ENCODE measurements at regions of chr4 and their contacts with region 1.

Region 1: DNA sequence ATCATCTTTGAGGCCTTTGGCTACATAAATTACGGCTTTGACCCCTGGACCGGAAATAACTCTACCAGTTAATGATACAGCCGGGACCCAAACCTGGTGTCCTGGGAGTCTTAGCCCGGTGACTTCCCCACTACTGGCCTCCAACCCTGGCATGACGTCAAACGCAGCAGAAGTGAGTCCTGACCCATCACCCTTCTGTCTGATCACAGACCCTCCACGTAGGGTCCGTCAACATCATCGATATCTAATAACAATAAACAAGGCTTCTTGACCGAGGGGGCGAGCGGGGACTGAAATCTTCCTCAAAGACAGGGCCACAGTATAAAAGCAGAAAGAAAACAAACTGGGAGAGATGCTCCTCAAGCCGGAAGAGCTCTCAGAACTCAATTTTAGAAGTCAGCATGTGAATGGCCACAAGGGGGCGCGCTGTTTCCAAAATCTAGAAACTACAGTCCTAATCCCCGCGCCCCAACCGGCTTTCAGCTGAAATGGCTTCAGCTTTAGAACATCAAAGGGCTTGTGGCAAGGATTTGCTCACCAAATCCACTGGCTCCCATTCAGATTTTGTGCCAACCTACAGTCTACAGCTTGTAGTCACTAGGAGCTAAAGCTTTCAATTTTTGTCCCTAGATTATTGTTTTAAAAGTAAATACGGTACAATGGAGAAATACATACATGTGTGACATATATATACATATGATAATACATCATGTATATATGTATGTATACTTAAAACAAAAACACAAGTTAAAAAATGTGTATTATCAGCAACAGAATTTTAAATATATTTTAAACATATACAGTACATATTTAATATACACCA is 46.4 kb upstream of the ENPP6 start:
- DNase-seq: peak; percentile 84
- H3K4me3 Mint-ChIP-seq: peak overlapping the region; percentile 19
- H3K27ac Mint-ChIP-seq: no peak overlapping the region
- H3K4me1 Mint-ChIP-seq: peaks cover 19% of the 10 kb centered on the region
- H3K27me3 Mint-ChIP-seq: no peaks in the 10 kb centered on the region
- CTCF ChIP-seq: peak; percentile 66

Region 2: DNA sequence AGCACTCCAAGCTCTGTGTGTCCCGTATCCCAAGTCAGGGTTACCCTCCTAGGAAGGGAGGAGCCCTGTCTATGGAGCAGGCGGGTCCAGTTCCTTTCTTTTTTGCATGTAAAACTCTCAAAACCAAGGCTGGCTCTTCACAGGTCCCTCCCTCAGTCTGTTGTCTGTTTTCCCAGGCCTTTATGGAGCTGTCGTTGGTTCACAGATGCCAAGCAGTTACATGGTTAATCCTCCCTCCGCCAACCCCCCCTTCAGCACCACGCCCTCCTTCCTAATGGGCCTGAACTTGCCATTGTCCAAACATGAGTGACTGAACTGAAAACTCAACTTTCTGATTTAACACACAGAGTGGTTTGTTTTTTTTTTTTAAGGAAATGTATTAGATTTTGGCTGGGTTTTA is 210.7 kb before region 1 on chr4:
- CTCF ChIA-PET with region 1: no interaction called
- intact Hi-C with region 1: no loop called
- DNase-seq: no peak
- H3K4me3 Mint-ChIP-seq: no peak overlapping the region
- H3K27ac Mint-ChIP-seq: no peak overlapping the region
- H3K4me1 Mint-ChIP-seq: no peaks in the 10 kb centered on the region
- H3K27me3 Mint-ChIP-seq: peaks cover 5% of the 10 kb centered on the region
- CTCF ChIP-seq: no peak

Region 3: DNA sequence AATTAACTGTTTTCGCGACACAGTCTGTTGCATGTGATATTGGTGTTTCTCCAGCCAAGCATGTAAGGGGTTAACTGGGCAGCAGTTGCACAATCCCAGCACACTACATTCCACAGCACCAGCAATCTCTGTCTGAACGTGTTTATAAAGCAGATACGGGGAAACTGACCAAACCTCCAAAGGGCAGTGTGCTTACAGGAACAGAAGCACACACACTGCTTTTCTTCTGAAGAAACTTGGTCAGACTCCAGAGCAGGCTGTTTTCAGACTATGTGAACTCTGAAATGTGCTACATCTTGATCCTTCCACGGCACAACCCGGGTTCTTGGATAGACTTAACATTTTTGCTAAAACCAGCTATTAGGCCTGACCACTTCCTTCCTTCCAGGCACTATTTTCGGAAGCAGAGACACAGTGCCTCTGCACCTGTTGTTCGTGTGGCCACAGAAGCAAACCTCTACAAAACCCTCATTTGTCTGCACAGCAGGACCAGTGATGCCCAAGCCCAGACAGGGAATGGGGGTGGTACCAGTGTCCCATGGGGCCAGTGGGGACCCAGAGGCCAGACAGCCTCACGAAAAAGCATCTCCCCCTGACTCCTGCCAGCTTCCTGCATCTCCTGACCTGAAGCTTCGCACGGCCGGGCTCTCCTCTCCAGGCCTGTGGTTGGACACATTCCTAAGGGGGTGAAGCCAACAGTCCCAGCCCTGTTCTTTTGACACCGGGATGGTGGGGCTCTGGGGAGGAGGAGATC is 120.1 kb after region 1 on chr4:
- CTCF ChIA-PET with region 1: interaction called, 4 read pairs
- intact Hi-C with region 1: loop called (anchors 5 kb)
- DNase-seq: peak; percentile 49
- H3K4me3 Mint-ChIP-seq: peak overlapping the region; percentile 60
- H3K27ac Mint-ChIP-seq: peak overlapping the region; percentile 89
- H3K4me1 Mint-ChIP-seq: peaks cover 49% of the 10 kb centered on the region
- H3K27me3 Mint-ChIP-seq: no peaks in the 10 kb centered on the region
- CTCF ChIP-seq: no peak

Region 4: GRCh38 chr4:184437565-184438265 is 173.6 kb after region 1 on chr4:
- CTCF ChIA-PET with region 1: interaction called, 11 read pairs
- intact Hi-C with region 1: no loop called
- DNase-seq: no peak
- H3K4me3 Mint-ChIP-seq: no peak overlapping the region
- H3K27ac Mint-ChIP-seq: no peak overlapping the region
- H3K4me1 Mint-ChIP-seq: no peaks in the 10 kb centered on the region
- H3K27me3 Mint-ChIP-seq: no peaks in the 10 kb centered on the region
- CTCF ChIP-seq: no peak

Region 5: DNA sequence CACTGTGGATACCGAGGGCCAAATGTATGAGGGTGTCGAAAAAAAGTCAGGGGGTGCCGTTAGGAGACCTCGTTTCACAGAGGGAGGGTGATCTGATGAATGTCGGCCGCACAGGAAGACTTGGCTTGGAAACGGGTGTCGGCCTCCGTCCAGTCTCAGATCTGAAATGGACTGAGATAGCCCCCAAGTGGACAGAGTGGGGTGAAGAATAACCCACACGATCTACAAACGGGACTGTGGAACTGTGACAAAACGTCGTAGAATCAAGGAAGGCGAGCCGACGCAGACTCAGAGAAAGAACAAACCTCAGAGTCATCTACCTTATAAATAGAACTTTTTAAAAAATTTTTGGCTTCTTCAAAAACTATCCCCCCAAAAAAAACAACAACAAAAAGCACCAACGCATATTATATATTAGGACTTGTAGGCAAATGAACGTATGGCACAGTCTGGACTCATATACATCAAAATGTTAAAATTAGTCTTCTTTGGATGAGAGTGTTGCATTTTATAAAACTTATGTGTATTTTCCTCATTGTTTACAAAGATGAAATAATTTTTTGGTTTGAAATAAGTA is 274.0 kb after region 1 on chr4:
- CTCF ChIA-PET with region 1: interaction called, 9 read pairs
- intact Hi-C with region 1: loop called (anchors 1 kb)
- DNase-seq: peak; percentile 70
- H3K4me3 Mint-ChIP-seq: peak overlapping the region; percentile 88
- H3K27ac Mint-ChIP-seq: peak overlapping the region; percentile 94
- H3K4me1 Mint-ChIP-seq: peaks cover 10% of the 10 kb centered on the region
- H3K27me3 Mint-ChIP-seq: no peaks in the 10 kb centered on the region
- CTCF ChIP-seq: peak; percentile 23

Region 6: DNA sequence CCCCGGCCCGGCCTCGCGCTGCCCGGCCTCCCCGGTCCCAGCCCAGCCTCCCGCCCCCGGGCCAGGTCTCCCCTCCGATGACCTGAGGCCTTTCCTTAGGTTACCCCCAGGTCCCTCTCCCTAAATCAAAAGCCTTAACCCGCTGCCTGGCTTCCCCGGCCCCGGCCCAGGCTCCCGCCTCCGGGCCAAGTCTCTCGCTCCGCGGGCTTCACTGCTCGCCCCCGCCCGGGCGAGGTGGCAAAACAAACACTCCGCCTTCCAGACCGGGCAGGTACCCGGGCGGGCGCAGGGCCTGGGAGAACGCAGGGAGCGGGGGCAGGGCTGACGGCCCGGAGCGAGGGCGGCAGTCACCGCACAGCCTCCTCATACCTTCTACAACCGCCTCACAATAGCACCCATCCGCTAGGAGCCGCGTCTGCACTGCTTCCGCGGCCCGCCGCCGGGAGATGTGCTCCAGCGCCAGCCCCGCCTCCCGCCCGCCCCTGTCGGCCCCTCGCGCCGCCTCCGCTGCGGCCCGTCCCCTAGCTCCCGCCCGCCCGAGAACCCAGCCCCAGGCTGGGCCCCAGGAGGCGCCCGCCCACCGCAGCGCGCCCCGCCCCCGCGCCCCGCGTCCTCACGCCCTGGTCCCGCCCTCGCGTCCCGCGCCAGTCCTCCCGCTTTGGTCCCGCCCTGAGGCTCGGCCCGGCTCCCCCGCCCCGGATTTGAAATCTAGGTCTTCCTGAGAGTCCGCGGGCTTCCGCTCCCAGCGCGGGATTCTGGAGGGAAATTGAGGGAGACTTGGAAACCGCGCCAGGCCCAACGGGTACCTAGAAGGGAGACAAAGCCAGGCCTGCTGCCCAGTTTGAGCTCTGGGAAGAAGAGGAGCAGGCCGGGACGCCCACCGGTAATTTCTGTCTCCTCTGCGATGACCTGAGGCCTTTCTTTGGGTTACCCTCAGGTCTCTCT is 385.2 kb after region 1 on chr4 and contains the starts of genes CASP3 and PRIMPOL:
- CTCF ChIA-PET with region 1: no interaction called
- intact Hi-C with region 1: loop called (anchors 5 kb)
- DNase-seq: peak; percentile 95
- H3K4me3 Mint-ChIP-seq: peak within 1 kb of the TSS; percentile 73
- H3K27ac Mint-ChIP-seq: peak within 1 kb of the TSS; percentile 77
- H3K4me1 Mint-ChIP-seq: peaks cover 19% of the 10 kb centered on the region
- H3K27me3 Mint-ChIP-seq: no peaks in the 10 kb centered on the region
- CTCF ChIP-seq: no peak
- total RNA-seq, gene CASP3: 21.8 and 22.2 TPM in 2 replicates
- total RNA-seq, gene PRIMPOL: 12.7 and 16.0 TPM in 2 replicates